ENCODE measurements at regions of chr4 and their contacts with region 1.

Region 1: DNA sequence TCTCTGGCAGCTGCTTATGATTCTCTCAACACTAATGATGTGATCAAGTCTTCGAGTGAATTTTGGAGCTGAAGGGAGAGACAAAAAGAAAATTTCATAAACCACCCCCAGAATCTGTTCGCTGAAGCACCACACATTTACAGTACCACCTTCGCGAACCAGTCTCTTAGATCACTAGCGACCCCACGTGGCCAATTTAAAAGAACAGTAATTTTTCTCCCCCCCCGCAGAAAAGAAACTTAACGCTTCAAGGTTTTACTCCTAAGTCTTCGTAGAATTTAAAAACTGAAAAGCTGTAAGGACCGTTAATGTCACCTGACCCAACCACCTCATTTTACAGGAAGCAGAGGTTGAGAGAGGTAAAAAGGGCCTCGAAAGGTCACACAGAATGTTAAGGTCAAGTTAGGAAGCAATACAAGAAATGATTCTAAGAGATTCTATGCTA is 187.5 kb downstream of the QDPR start:
- DNase-seq: peak in 1 of 2 donors; percentile 69
- ATAC-seq: peak; percentile 34 to 87 (median 72)
- H3K4me3 ChIP-seq: peak overlapping the region in 2 of 10 donors; percentile 11 to 16
- H3K27ac ChIP-seq: no peak overlapping the region
- H3K4me1 ChIP-seq: peaks cover 0 to 18% (median 10%) of the 10 kb centered on the region in 9 donors
- H3K27me3 ChIP-seq: no peaks in the 10 kb centered on the region
- CTCF ChIP-seq: peak; percentile 52 to 89 (median 72)

Region 2: GRCh38 chr4:16289897-16290554 is 1034.4 kb before region 1 on chr4:
- intact Hi-C with region 1: loop called in 9 of 10 experiments (anchors 1 to 10 kb)
- DNase-seq: peak in 1 of 2 donors; percentile 14
- ATAC-seq: peak in 1 of 8 donors; percentile 49
- H3K4me3 ChIP-seq: peak overlapping the region in 1 of 10 donors; percentile 2
- H3K27ac ChIP-seq: no peak overlapping the region
- H3K4me1 ChIP-seq: peaks cover 0 to 15% (median 0%) of the 10 kb centered on the region in 9 donors
- H3K27me3 ChIP-seq: peaks cover 0 to 33% (median 10%) of the 10 kb centered on the region in 7 donors
- CTCF ChIP-seq: peak; percentile 46 to 85 (median 73)

Region 3: GRCh38 chr4:16516796-16517439 is 807.5 kb before region 1 on chr4:
- intact Hi-C with region 1: loop called in 4 of 10 experiments (anchors 10 kb)
- DNase-seq: peak in 1 of 2 donors; percentile 41
- ATAC-seq: peak in 4 of 8 donors; percentile 42 to 72 (median 59)
- H3K4me3 ChIP-seq: no peak overlapping the region
- H3K27ac ChIP-seq: peak overlapping the region in 1 of 10 donors; percentile 33
- H3K4me1 ChIP-seq: peaks cover 0 to 29% (median 14%) of the 10 kb centered on the region in 9 donors
- H3K27me3 ChIP-seq: no peaks in the 10 kb centered on the region
- CTCF ChIP-seq: peak in 6 of 9 donors; percentile 29 to 54 (median 40)

Region 4: DNA sequence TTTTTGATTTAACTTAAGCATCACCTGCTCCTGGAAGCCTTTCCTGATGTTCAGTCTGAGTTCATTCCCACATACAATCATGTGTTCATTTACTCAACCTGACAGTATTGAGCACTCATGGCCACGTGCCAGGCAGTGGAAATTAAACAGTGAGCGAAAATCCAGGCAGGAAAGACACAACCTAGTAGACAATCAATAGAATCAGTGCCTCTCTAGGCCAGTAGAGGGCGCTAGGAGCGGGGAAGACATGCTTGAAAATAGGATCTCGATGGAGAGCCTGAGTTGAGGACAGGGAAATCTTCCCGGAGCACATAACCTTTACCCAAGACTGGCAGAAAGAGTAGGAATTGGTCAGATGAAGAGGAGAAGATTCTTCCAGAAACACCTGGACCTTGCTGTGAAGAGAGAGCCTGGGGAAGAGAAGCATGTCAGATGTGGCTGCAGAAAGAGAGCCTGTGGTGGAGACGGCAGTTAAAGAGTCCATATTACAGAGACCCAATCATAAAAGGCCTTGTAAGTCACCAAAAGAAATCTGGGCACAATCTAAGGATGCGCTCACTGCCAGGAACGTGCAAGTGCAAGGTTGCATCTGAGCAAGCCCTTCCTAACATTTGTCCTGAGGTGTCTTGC is 529.5 kb before region 1 on chr4:
- intact Hi-C with region 1: loop called (anchors 2 to 10 kb)
- DNase-seq: peak; percentile 29 to 80
- ATAC-seq: peak; percentile 57 to 72 (median 67)
- H3K4me3 ChIP-seq: no peak overlapping the region
- H3K27ac ChIP-seq: peak overlapping the region in 4 of 10 donors; percentile 3 to 28 (median 16)
- H3K4me1 ChIP-seq: peaks cover 0 to 35% (median 7%) of the 10 kb centered on the region in 9 donors
- H3K27me3 ChIP-seq: no peaks in the 10 kb centered on the region
- CTCF ChIP-seq: peak; percentile 48 to 91 (median 83)

Region 5: DNA sequence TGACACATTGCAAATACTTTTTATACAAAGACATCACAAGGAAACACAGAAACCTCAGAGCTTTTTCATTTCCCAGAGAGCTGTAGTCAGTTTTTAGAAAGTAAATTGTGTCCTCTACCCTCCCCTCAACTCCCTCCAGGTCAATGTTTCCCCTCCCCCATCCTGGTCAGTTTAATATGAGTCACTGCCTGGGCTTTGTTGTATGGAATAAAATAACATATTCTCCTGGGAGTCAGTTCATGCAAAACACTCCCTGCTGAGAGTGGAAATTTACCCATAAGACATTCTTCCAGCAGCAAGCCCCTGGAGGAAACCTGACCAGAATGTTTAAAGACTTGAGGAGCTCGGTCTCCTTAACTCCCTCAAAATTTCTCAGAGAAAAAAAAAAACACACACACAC is 155.8 kb before region 1 on chr4:
- intact Hi-C with region 1: loop called in 8 of 10 experiments (anchors 2 to 10 kb)
- DNase-seq: peak in 1 of 2 donors; percentile 65
- ATAC-seq: peak in 7 of 8 donors; percentile 56 to 87 (median 74)
- H3K4me3 ChIP-seq: no peak overlapping the region
- H3K27ac ChIP-seq: peak overlapping the region in 5 of 10 donors; percentile 16 to 70 (median 53)
- H3K4me1 ChIP-seq: peaks cover 4 to 42% (median 20%) of the 10 kb centered on the region in 9 donors
- H3K27me3 ChIP-seq: no peaks in the 10 kb centered on the region
- CTCF ChIP-seq: no peak

Region 6: DNA sequence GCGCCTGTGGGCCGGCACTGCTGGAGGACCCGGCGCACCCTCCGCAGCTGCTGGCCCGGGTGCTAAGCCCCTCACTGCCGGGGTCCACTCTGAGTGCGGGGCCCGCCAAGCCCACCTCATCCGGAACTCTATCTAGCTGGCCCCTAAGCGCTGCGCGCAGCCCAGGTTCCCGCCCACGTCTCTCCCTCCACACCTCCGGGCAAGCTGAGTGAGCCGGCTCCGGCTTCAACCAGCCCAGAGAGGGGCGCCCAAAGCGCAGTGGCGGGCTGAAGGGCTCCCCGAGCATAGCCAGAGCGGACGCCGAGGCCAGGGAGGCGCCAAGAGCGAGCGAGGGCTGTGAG is 112.3 kb after region 1 on chr4:
- intact Hi-C with region 1: no loop called
- DNase-seq: no peak
- ATAC-seq: peak in 1 of 8 donors; percentile 61
- H3K4me3 ChIP-seq: no peak overlapping the region
- H3K27ac ChIP-seq: peak overlapping the region in 1 of 10 donors; percentile 48
- H3K4me1 ChIP-seq: peaks cover 0 to 4% (median 0%) of the 10 kb centered on the region in 9 donors
- H3K27me3 ChIP-seq: no peaks in the 10 kb centered on the region
- CTCF ChIP-seq: no peak